ENCODE measurements at regions of chr21 and their contacts with region 1.

Region 1: DNA sequence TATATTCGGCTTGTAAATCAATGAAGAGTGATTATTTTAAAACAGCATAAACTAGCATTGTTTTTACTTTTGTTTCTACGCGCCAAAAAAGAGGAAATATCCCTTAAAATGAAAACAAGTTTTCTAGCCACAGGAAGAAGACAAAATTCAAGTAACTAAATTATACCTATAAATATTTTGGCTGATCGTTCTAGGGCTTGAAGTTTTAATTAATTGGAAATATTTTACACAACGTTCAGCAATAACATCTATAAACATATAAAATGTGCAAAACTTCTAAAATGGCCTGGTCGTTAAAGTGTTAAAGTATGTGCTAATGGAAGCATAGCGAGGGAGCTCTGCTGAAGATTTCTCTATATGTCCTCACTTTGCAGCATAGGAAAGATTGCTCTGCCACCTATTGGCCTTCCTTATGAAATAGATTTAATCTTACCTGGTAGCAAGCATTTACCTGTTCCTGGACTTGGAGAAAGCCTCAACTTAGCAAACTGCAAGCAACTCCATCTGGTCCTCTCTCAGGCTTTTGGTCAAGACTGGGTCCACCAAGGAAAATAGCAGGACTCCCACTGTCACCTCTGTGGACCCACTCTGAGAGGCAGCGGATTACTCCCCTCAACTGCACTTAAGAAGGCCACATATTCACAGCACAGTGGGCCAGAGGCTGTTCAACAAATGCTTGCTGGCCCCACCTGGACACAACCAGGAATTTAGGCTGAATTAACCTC is 351.3 kb upstream of the RUNX1 start:
- DNase-seq: peak in 1 of 5 donors; percentile 22
- ATAC-seq: peak in 3 of 4 donors; percentile 63 to 73 (median 67)
- H3K4me3 ChIP-seq: peak overlapping the region in 1 of 12 donors; percentile 19
- H3K27ac ChIP-seq: peak overlapping the region in 2 of 12 donors; percentile 8 to 42
- H3K4me1 ChIP-seq: peaks cover 0 to 27% (median 0%) of the 10 kb centered on the region in 12 donors
- H3K27me3 ChIP-seq: peaks cover 0 to 20% (median 0%) of the 10 kb centered on the region in 9 donors
- CTCF ChIP-seq: peak in 11 of 12 donors; percentile 18 to 59 (median 48)
- POLR2A ChIP-seq: no peak

Region 2: DNA sequence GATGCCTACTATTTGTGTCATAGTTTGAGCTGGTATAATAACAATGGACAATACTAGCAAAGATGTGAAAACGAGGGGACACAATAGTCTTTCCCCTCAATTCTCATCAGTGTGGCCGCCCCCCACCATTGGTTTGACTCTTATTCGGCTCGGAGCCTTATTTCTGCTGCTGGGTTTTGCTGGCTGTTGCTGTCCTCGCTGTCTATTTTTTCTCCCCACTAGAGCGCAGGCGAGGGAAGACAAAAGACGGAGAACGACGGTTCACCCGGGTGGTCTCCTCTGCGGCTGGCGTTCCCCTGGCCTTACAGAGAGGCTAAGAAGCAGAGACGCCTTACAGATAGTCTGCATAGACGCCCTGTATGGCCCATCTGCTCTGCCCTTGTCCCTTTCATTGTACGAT is 712.2 kb before region 1 on chr21:
- intact Hi-C with region 1: loop called in 1 of 10 experiments (anchors 2 kb)
- DNase-seq: peak in 1 of 5 donors; percentile 57
- ATAC-seq: no peak
- H3K4me3 ChIP-seq: no peak overlapping the region
- H3K27ac ChIP-seq: no peak overlapping the region
- H3K4me1 ChIP-seq: peaks cover 0 to 15% (median 0%) of the 10 kb centered on the region in 12 donors
- H3K27me3 ChIP-seq: no peaks in the 10 kb centered on the region
- CTCF ChIP-seq: peak in 5 of 12 donors; percentile 38 to 62 (median 54)
- POLR2A ChIP-seq: no peak

Region 3: GRCh38 chr21:35002879-35003722 is 397.3 kb before region 1 on chr21:
- intact Hi-C with region 1: no loop called
- DNase-seq: peak in 1 of 5 donors; percentile 41
- ATAC-seq: peak; percentile 25 to 85 (median 38)
- H3K4me3 ChIP-seq: no peak overlapping the region
- H3K27ac ChIP-seq: peak overlapping the region in 2 of 12 donors; percentile 3 to 29
- H3K4me1 ChIP-seq: peaks cover 0 to 43% (median 0%) of the 10 kb centered on the region in 12 donors
- H3K27me3 ChIP-seq: no peaks in the 10 kb centered on the region
- CTCF ChIP-seq: no peak
- POLR2A ChIP-seq: no peak

Region 4: GRCh38 chr21:35051287-35051818 is 349.0 kb before region 1 on chr21:
- intact Hi-C with region 1: loop called in 9 of 10 experiments (anchors 1 to 10 kb)
- DNase-seq: peak; percentile 82 to 91 (median 86)
- ATAC-seq: peak; percentile 86 to 94 (median 91)
- H3K4me3 ChIP-seq: no peak overlapping the region
- H3K27ac ChIP-seq: peak overlapping the region in 7 of 12 donors; percentile 13 to 76 (median 37)
- H3K4me1 ChIP-seq: peaks cover 0 to 47% (median 12%) of the 10 kb centered on the region in 12 donors
- H3K27me3 ChIP-seq: peaks cover 0 to under 1% (median 0%) of the 10 kb centered on the region in 9 donors
- CTCF ChIP-seq: peak in 11 of 12 donors; percentile 43 to 71 (median 60)
- POLR2A ChIP-seq: no peak

Region 5: DNA sequence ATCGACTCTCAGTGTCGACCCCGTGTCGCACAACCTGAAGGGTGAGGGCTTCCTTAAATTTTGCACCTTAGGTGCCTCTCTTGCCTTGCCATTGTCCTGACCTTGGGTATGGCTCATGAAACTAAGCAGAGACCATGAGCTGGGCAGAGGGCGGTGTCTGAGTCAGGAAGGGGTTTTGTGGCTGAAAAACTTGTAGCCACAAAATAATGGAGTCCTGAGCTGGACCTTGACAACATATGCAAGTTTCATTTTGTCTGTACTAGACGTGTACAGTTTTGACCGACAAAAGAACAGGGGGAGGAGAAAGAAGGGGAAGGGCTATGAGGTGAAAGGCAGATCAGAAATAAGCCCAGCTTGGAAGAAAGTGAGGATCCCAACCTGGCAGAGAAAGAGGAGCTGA is 343.0 kb before region 1 on chr21:
- intact Hi-C with region 1: loop called in 6 of 10 experiments (anchors 5 to 10 kb)
- DNase-seq: no peak
- ATAC-seq: no peak
- H3K4me3 ChIP-seq: no peak overlapping the region
- H3K27ac ChIP-seq: no peak overlapping the region
- H3K4me1 ChIP-seq: peaks cover 0 to 10% (median 1%) of the 10 kb centered on the region in 12 donors
- H3K27me3 ChIP-seq: peaks cover 0 to 2% (median 0%) of the 10 kb centered on the region in 9 donors
- CTCF ChIP-seq: no peak
- POLR2A ChIP-seq: no peak

Region 6: DNA sequence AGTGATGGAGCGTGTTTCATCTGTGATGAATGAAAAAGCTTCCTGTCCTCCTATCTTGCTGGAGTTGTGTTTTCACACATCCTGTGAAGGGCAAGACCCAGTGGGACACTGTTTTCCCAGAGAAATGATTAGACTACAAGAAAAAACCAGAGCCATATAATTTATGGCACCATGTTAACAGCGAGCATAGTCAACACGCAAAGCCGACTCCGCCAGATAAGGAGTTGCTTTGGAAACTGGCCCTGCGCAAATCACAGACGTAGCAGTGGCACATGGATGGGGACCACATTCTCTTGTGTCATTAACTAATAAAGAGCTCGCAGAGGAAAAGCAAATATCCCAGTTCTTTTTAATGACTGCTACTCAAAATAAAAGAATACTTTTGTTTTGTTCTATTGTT is 119.9 kb after region 1 on chr21:
- intact Hi-C with region 1: no loop called
- DNase-seq: no peak
- ATAC-seq: no peak
- H3K4me3 ChIP-seq: no peak overlapping the region
- H3K27ac ChIP-seq: no peak overlapping the region
- H3K4me1 ChIP-seq: no peaks in the 10 kb centered on the region
- H3K27me3 ChIP-seq: no peaks in the 10 kb centered on the region
- CTCF ChIP-seq: no peak
- POLR2A ChIP-seq: no peak

Region 7: GRCh38 chr21:35840197-35840799 is 439.9 kb after region 1 on chr21:
- intact Hi-C with region 1: loop called in 2 of 10 experiments (anchors 10 kb)
- DNase-seq: peak in 4 of 5 donors; percentile 48 to 64 (median 56)
- ATAC-seq: peak in 3 of 4 donors; percentile 51 to 62 (median 58)
- H3K4me3 ChIP-seq: no peak overlapping the region
- H3K27ac ChIP-seq: no peak overlapping the region
- H3K4me1 ChIP-seq: peaks cover 0 to 7% (median 0%) of the 10 kb centered on the region in 12 donors
- H3K27me3 ChIP-seq: no peaks in the 10 kb centered on the region
- CTCF ChIP-seq: peak; percentile 62 to 87 (median 82)
- POLR2A ChIP-seq: no peak